B cell (primary cell): ENCODE measurements at regions of chr4 and their contacts with region 1.

Region 1: DNA sequence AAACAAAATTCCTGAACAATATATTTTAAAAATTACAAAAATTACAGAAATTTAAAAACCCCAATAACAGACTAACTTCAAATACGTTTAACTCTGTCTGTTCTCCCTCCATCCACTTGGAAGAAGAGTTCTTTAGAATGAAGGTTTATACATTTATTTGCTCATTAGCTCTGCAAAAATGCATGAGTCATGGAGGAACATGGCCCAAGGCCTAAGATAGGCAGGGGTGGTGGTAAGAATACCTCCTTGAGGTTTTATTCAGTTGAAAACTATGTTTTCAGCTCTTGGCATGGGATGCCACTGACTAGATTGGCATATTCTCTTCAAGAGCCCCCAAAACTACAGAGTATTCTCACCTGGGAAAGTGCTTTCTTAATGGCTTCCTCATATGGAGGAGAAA is 8.8 kb upstream of the LRRC66 start:
- DNase-seq: no peak
- ATAC-seq: no peak
- H3K4me3 ChIP-seq: no peak overlapping the region
- H3K4me3 Mint-ChIP-seq: no peak overlapping the region
- H3K27ac ChIP-seq: no peak overlapping the region
- H3K27ac Mint-ChIP-seq: no peak overlapping the region
- H3K4me1 ChIP-seq: no peaks in the 10 kb centered on the region
- H3K4me1 Mint-ChIP-seq: no peaks in the 10 kb centered on the region
- H3K27me3 ChIP-seq: no peaks in the 10 kb centered on the region
- H3K27me3 Mint-ChIP-seq: no peaks in the 10 kb centered on the region
- CTCF ChIP-seq: no peak

Region 2: GRCh38 chr4:51895813-51896408 is 133.1 kb before region 1 on chr4:
- CTCF ChIA-PET with region 1: interaction called, 3 read pairs
- POLR2A ChIA-PET with region 1: no interaction called
- intact Hi-C with region 1: loop called (anchors 2 kb)
- DNase-seq: peak; percentile 61
- ATAC-seq: peak; percentile 89
- H3K4me3 ChIP-seq: no peak overlapping the region
- H3K4me3 Mint-ChIP-seq: no peak overlapping the region
- H3K27ac ChIP-seq: no peak overlapping the region
- H3K27ac Mint-ChIP-seq: no peak overlapping the region
- H3K4me1 ChIP-seq: no peaks in the 10 kb centered on the region
- H3K4me1 Mint-ChIP-seq: peaks cover 3% of the 10 kb centered on the region
- H3K27me3 ChIP-seq: no peaks in the 10 kb centered on the region
- H3K27me3 Mint-ChIP-seq: no peaks in the 10 kb centered on the region
- CTCF ChIP-seq: peak; percentile 83

Region 3: GRCh38 chr4:52069571-52069970 is 40.6 kb after region 1 on chr4:
- CTCF ChIA-PET with region 1: no interaction called
- POLR2A ChIA-PET with region 1: no interaction called
- intact Hi-C with region 1: no loop called
- DNase-seq: no peak
- ATAC-seq: no peak
- H3K4me3 ChIP-seq: no peak overlapping the region
- H3K4me3 Mint-ChIP-seq: no peak overlapping the region
- H3K27ac ChIP-seq: no peak overlapping the region
- H3K27ac Mint-ChIP-seq: no peak overlapping the region
- H3K4me1 ChIP-seq: no peaks in the 10 kb centered on the region
- H3K4me1 Mint-ChIP-seq: no peaks in the 10 kb centered on the region
- H3K27me3 ChIP-seq: peaks cover 0 to 9% (median 2%) of the 10 kb centered on the region in 4 experiments
- H3K27me3 Mint-ChIP-seq: peaks cover 26% of the 10 kb centered on the region
- CTCF ChIP-seq: no peak

Region 4: DNA sequence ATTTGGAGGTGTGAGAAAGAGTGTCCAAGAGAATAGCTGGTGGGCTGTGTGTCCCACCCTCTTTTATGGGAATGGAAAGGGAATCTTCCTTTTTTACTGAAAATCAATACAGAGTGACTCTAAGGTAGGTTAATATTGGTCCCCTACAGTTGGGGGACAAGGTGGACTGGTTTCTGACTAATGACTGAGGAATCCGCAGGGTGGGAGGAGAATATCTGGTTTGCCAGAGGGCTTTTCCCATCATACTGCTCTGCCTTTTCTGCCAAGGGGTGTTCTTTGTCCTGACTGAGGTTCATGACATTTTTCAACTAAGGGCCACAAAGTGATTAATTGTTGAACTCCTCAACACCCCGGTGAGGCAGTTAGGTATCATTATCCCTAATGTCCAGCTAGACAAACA is 283.7 kb after region 1 on chr4:
- CTCF ChIA-PET with region 1: no interaction called
- POLR2A ChIA-PET with region 1: no interaction called
- intact Hi-C with region 1: no loop called
- DNase-seq: no peak
- ATAC-seq: no peak
- H3K4me3 ChIP-seq: no peak overlapping the region
- H3K4me3 Mint-ChIP-seq: no peak overlapping the region
- H3K27ac ChIP-seq: no peak overlapping the region
- H3K27ac Mint-ChIP-seq: no peak overlapping the region
- H3K4me1 ChIP-seq: no peaks in the 10 kb centered on the region
- H3K4me1 Mint-ChIP-seq: no peaks in the 10 kb centered on the region
- H3K27me3 ChIP-seq: no peaks in the 10 kb centered on the region
- H3K27me3 Mint-ChIP-seq: peaks cover 9% of the 10 kb centered on the region
- CTCF ChIP-seq: no peak